Heart left ventricle (tissue), 16 donors: ENCODE measurements at regions of chr11 and their contacts with region 1.

Region 1: GRCh38 chr11:122144752-122145151 is 28.7 kb upstream of the BLID start:
- DNase-seq: no peak
- ATAC-seq: no peak
- H3K4me3 ChIP-seq: no peak overlapping the region
- H3K27ac ChIP-seq: no peak overlapping the region
- H3K4me1 ChIP-seq: peaks cover 0 to 7% (median 0%) of the 10 kb centered on the region in 12 donors
- H3K27me3 ChIP-seq: no peaks in the 10 kb centered on the region
- CTCF ChIP-seq: no peak
- POLR2A ChIP-seq: no peak

Region 2: GRCh38 chr11:122126024-122126688 is 18.6 kb before region 1 on chr11:
- intact Hi-C with region 1: loop called in 1 of 10 experiments (anchors 1 kb)
- DNase-seq: no peak
- ATAC-seq: no peak
- H3K4me3 ChIP-seq: no peak overlapping the region
- H3K27ac ChIP-seq: no peak overlapping the region
- H3K4me1 ChIP-seq: peaks cover 0 to 6% (median 0%) of the 10 kb centered on the region in 12 donors
- H3K27me3 ChIP-seq: no peaks in the 10 kb centered on the region
- CTCF ChIP-seq: no peak
- POLR2A ChIP-seq: no peak

Region 3: DNA sequence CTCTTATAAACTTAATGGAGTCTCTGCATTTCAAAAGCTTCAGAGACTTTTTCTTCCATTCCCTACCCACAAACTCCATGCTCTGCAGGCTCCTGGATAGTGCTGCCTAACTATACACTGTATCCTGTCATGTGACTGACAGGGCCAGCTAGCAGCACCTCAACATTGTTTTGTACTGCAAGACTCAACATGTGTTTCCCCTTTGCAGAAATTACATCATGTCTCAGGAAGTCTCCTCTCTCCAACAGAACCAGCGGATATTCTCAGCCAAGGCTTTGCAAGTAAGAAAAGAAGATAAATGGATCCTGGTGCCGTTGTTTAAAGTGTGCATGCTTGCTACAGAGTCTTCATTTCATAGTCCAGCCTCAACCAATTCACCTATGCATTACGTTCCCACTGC is 346.8 kb after region 1 on chr11:
- intact Hi-C with region 1: no loop called
- DNase-seq: peak in 2 of 5 donors; percentile 34 to 37
- ATAC-seq: peak; percentile 69 to 96 (median 84)
- H3K4me3 ChIP-seq: no peak overlapping the region
- H3K27ac ChIP-seq: peak overlapping the region in 9 of 12 donors; percentile 9 to 60 (median 48)
- H3K4me1 ChIP-seq: peaks cover 0 to 22% (median 12%) of the 10 kb centered on the region in 12 donors
- H3K27me3 ChIP-seq: no peaks in the 10 kb centered on the region
- CTCF ChIP-seq: no peak
- POLR2A ChIP-seq: no peak